Dendritic cell treated with granulocyte-macrophage colony-stimulating factor and Interleukin-4, amounts not matched to agents 40 ng/mL and 50 ng/mL, for 4 days (primary cell): ENCODE measurements at regions of chr3 and their contacts with region 1.

Region 1: GRCh38 chr3:194573691-194574437 is 59.4 kb downstream of the TMEM44 start:
- H3K4me3 Mint-ChIP-seq: no peak overlapping the region
- H3K27ac Mint-ChIP-seq: peak overlapping the region; percentile 76
- H3K4me1 Mint-ChIP-seq: peaks cover 72% of the 10 kb centered on the region
- H3K27me3 Mint-ChIP-seq: peaks cover 8% of the 10 kb centered on the region

Region 2: DNA sequence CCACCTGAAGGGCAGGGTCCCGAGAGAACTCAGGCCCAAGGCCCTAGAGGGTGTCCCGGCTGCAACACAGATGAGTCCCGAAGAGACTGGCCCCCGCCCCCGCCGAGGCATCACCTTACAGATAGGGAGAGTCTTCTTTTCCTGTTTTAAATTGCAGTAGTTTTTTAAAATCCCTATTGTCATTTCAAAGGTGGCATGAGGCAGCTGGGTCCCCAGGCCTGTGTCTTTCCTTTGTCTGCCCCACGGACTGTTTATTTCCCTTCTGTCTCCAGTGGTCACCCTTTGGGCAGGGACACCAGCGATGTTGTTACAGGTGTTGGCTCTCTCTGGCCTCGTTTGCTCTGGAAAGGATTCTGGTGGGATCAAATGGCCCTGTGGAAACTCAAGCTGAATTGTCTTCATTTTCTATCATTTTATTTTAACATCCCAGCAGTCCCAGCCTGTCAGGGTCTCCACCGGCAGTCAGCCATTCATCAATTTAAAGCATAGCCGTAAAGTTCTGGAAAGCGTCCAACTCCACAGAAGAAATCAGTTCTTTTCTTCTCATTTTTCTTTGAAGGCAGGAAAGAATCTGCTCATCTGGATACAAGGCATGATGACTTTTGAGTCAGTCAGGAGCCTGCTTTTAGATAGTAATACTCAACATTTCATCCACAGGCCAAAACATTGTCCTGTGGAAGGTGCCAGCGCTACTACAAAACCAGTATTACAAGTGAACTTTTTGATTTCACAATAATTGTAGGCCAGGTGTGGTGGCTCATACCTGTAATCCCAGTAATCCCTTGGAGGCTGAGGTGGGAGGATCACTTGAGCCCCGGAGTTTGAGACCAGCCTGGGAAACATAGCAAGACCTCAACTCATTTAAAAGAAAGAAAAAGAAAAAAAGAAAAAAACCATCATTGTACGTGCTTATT is 341.7 kb before region 1 on chr3:
- intact Hi-C with region 1: no loop called
- H3K4me3 Mint-ChIP-seq: no peak overlapping the region
- H3K27ac Mint-ChIP-seq: no peak overlapping the region
- H3K4me1 Mint-ChIP-seq: no peaks in the 10 kb centered on the region
- H3K27me3 Mint-ChIP-seq: peaks cover 16% of the 10 kb centered on the region

Region 3: DNA sequence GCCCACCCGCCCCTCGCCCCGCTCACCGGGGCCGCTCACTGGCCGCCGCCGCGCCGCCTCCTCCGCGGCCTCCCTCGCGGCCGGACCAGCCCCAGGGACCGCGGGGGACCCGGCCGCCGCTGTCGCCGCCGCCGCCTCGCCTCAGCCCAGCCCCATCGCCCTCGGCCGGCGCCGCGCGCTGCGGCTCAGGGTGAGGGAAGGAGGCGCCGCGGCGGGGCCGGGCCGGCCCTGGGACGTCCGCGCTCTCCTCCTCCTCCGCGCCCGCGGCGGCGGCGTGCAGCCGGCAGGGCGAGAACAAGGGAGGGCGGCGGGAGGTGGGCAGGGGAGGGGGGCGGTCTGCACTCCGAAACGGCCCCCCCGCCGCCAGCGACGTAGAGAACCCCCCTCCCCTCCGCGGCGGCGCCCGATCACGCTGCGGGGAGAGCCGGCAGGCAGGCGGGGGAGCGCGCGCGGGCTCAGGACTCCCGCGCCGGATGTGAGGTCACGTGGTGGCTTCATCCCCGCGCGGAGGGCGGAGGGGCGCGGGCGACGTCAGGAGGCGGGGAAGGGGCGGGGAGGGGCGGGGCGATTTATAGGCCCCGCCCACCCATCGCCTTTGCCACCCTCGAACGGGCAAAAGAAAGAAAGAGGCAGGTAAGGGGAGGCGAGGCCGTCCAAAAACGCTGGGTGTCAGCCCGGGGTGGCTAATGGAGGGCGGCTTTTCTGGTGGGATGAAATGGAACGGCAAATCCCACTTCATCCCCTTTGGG is 87.2 kb before region 1 on chr3 and contains the start of gene ATP13A3:
- intact Hi-C with region 1: loop called (anchors 5 kb)
- H3K4me3 Mint-ChIP-seq: peak within 1 kb of the TSS; percentile 85
- H3K27ac Mint-ChIP-seq: peak within 1 kb of the TSS; percentile 92
- H3K4me1 Mint-ChIP-seq: peaks cover 69% of the 10 kb centered on the region
- H3K27me3 Mint-ChIP-seq: no peaks in the 10 kb centered on the region

Region 4: GRCh38 chr3:194532591-194532990 is 41.3 kb before region 1 on chr3:
- intact Hi-C with region 1: loop called (anchors 1 kb)
- H3K4me3 Mint-ChIP-seq: no peak overlapping the region
- H3K27ac Mint-ChIP-seq: no peak overlapping the region
- H3K4me1 Mint-ChIP-seq: peaks cover 28% of the 10 kb centered on the region
- H3K27me3 Mint-ChIP-seq: no peaks in the 10 kb centered on the region